Head of caudate nucleus (tissue), 42 donors: ENCODE measurements at regions of chr17 and their contacts with region 1.

Region 1: GRCh38 chr17:56125830-56126819 is 27.1 kb upstream of the ANKFN1 start:
- DNase-seq: peak in 24 of 42 donors; percentile 3 to 73 (median 30)

Region 2: GRCh38 chr17:55969562-55970324 is 156.4 kb before region 1 on chr17:
- intact Hi-C with region 1: no loop called
- DNase-seq: no peak

Region 3: DNA sequence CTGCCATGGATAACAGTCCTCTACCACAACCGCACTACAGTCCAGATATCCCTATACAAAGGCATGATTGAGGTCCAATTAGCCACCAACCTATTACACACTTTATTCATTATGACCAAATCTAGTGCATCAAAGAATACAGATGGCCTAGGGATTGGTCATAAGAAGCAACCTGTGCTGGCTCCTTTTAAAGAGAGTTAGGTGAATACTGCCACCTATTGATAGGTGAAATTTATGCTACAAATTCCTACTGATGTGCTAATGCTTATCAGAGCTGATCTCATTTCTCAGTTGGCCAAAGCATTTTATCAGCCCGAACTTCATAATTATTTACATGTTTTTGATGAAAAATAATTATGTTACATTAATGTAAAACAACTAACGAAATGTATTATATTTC is 193.4 kb after region 1 on chr17:
- intact Hi-C with region 1: loop called (anchors 10 kb)
- DNase-seq: no peak